Activated CD4-positive, alpha-beta T cell treated with anti-CD3 and anti-CD28 coated beads, Interleukin-2, amount 10 ng/mL, durations not matched to agents 24 days and 14 days (primary cell): ENCODE measurements at regions of chr1 and their contacts with region 1.

Region 1: DNA sequence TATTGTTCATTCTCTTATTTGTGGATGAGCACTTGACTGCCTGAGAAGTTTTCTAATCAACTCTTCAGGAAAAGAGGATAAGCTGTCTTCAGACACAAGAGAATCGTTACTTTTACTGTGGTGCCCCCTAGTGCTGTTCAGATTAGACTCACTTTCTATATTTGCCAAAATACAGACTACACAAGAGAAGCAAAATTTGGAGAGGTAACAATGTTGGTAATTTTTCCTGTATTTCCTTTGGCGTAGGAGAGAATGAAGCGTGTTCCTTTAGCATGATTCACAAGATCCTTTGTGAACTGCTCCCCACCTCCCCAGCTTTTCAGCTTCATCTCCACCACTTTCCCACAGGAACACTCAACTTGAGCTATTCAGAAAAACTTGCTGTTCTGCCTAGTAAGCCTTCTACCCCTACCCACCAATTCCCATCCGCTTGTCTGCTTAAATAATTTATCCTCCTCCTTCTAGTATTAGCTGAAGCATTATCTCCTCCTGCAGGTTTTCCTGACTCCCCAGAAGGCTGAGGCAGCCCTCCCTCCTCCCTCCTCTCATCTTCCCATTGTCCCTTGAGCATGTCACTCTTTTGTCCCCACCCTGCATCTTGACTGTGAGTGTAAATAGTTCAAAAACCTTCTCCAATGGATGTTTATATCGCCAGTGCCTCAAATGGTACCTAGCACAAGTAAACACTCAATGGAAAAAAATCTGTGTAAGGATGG is 4.5 kb downstream of the TNFSF4 start:
- DNase-seq: peak; percentile 67
- H3K4me3 Mint-ChIP-seq: no peak overlapping the region
- H3K27ac Mint-ChIP-seq: no peak overlapping the region
- H3K4me1 Mint-ChIP-seq: peaks cover 32% of the 10 kb centered on the region
- H3K27me3 Mint-ChIP-seq: peaks cover 32% of the 10 kb centered on the region

Region 2: GRCh38 chr1:173224280-173224892 is 21.8 kb after region 1 on chr1:
- intact Hi-C with region 1: loop called (anchors 1 kb)
- DNase-seq: no peak
- H3K4me3 Mint-ChIP-seq: no peak overlapping the region
- H3K27ac Mint-ChIP-seq: no peak overlapping the region
- H3K4me1 Mint-ChIP-seq: peaks cover 2% of the 10 kb centered on the region
- H3K27me3 Mint-ChIP-seq: peaks cover 5% of the 10 kb centered on the region

Region 3: DNA sequence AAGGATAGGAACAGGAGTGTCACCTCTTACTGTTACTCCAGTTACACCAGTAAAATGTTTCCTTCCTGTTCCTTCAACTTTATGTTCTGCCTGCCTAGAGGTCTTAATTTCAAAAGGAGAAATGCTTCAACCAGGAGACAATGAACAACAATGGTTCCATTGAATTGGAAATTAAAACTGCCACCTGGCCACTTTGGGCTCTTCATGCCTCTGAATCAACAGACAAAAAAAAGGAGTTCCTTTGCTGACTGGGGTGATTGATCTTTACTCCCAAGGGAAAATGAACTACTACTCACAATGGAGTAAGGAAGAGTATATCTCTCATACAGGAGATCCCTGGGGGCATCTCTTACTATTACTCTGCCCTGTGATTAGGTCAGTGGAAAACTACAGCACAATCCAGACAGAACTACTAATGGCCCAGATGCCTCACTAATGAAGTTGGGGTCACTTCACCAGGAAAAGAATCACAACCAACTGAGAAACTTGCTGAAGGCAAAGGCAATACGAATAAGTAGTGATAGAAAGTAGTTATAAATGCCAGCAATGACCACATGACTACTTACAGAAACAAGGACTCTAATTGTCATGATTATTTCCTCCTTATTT is 197.9 kb after region 1 on chr1:
- intact Hi-C with region 1: no loop called
- DNase-seq: no peak
- H3K4me3 Mint-ChIP-seq: no peak overlapping the region
- H3K27ac Mint-ChIP-seq: no peak overlapping the region
- H3K4me1 Mint-ChIP-seq: no peaks in the 10 kb centered on the region
- H3K27me3 Mint-ChIP-seq: no peaks in the 10 kb centered on the region

Region 4: GRCh38 chr1:173562813-173563212 is 360.2 kb after region 1 on chr1:
- intact Hi-C with region 1: no loop called
- DNase-seq: no peak
- H3K4me3 Mint-ChIP-seq: no peak overlapping the region
- H3K27ac Mint-ChIP-seq: peak overlapping the region; percentile 10
- H3K4me1 Mint-ChIP-seq: peaks cover 7% of the 10 kb centered on the region
- H3K27me3 Mint-ChIP-seq: peaks cover 25% of the 10 kb centered on the region